Activated naive CD4-positive, alpha-beta T cell treated with anti-CD3 and anti-CD28 coated beads for 36 hours (primary cell): ENCODE measurements at regions of chr1 and their contacts with region 1.

Region 1: DNA sequence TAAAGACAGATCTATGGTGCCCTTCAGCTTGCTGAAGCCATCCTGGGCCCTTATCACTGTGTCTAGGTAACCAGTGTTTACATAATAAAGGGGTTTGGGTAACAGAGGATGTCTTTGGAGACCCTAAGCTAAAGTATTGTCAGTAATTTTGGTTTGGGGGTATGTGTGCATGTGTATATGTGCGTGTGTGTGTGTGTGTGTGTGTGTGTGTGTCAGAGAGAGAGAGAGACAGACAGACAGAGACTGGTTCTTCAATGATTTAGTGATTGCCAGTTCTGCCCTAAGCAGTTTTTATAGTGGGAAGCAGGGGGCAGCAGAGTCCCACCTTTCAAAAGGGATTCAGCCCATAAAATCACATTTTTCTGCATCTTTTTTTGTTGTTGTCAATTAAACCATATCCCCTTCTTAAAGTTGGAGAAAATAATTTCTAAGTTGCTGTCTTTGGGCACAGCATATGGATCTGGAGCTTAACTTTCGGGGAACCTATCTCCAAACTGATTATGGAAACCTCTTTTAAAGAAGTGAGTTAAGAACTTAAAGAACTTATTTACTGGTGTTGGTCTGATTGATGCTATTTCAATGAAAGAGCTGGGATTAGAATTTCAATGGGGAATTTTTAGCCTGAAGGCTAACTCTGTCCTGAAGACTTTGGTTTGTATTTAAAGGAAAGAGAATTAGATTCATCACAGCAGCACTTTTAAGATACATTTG is 51.1 kb downstream of the ZNF326 start:
- DNase-seq: peak; percentile 55
- H3K4me3 Mint-ChIP-seq: no peak overlapping the region
- H3K27ac Mint-ChIP-seq: no peak overlapping the region
- H3K4me1 Mint-ChIP-seq: no peaks in the 10 kb centered on the region
- H3K27me3 Mint-ChIP-seq: no peaks in the 10 kb centered on the region

Region 2: GRCh38 chr1:90114521-90115141 is 68.6 kb after region 1 on chr1:
- CTCF ChIA-PET with region 1: no interaction called
- intact Hi-C with region 1: loop called (anchors 2 kb)
- DNase-seq: no peak
- H3K4me3 Mint-ChIP-seq: no peak overlapping the region
- H3K27ac Mint-ChIP-seq: no peak overlapping the region
- H3K4me1 Mint-ChIP-seq: no peaks in the 10 kb centered on the region
- H3K27me3 Mint-ChIP-seq: peaks cover 27% of the 10 kb centered on the region

Region 3: DNA sequence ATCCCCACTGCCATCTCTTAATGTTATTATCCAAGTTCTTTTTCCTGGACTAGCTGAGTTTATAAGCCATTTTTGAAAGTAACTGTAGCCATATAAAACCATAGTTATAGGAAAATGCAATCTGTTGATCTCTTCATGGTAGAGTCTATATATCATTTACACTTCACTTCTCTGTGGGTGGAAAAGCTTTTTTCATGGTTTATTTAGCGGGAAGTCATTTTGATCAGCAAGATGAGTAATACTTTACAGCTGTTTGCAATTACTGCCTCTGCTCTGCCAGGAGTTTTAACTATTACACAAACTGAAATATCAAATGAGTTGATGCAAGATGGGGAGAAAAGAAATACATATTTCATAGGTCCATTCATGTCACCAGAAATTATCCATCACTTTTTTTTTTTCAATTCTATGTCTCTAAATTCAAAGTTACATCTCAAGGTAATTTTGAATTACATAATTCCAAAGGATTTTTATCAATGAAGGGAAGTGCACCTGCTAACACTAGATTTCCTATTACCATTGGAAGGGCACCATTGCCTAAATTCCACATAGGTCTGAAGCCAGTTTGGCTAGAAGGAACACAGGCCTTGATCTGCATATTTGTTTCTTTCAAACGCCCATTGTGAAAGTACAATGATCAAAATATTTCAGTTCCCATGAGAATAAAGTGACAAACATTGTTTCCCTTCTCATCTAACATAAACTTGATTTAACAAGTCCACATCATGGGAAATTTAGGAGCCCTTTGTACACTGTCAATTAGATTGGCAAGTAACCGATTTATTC is 245.6 kb after region 1 on chr1:
- CTCF ChIA-PET with region 1: no interaction called
- intact Hi-C with region 1: no loop called
- DNase-seq: no peak
- H3K4me3 Mint-ChIP-seq: no peak overlapping the region
- H3K27ac Mint-ChIP-seq: no peak overlapping the region
- H3K4me1 Mint-ChIP-seq: no peaks in the 10 kb centered on the region
- H3K27me3 Mint-ChIP-seq: peaks cover 3% of the 10 kb centered on the region